ENCODE measurements at regions of chr20 and their contacts with region 1.

Region 1: DNA sequence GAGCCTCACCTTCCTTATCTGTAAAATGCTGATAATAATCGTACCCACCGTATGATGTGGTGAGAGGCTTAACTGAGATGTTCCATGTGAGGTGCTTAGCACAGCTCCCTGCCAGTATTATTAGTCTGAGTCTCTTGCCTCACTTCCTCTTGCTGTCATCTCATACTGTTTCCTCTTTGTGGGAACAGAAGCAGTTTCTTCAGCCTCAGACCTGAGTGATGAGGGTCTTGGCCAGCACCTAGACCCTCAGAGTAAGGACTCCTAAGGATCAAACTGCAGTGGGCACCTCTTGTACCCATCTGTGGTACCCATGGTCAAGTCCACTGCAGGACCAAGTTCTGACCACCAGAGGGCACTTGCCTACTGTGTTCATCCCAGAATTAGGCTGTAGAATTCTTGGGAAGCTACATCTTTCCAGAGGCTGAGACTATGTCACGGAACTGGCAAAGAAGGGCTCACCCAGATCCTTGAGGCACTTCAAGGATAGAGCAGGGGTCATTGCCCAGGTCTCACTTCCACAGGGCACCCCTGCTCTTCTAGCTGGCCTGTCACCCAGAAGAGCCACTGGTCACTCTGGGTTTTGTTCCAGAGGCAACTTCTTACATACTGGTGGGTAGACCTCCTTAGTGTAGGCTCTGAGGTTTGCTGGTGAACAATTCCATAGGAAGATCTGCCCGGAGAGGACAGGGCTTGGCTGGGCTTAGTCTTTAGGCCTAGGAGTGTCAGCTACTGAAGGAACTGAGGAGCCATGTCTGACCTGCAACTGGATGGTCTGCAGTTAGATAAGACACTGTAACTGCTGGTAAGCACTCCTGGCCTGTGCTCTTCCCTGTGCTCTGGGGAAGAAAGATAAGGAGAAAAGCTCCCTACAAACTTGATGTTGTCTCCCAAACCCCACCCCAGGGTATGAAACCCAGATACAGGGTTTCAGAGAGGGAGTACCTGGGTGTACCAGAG is 20.6 kb upstream of the SGK2 start:
- DNase-seq: peak; percentile 60
- ATAC-seq: peak; percentile 96
- H3K4me3 ChIP-seq: no peak overlapping the region
- H3K27ac ChIP-seq: no peak overlapping the region
- H3K4me1 ChIP-seq: no peaks in the 10 kb centered on the region; the same call in 1 of the 2 replicates
- H3K27me3 ChIP-seq: no peaks in the 10 kb centered on the region; the same call in 1 of the 2 replicates
- CTCF ChIP-seq: peak; percentile 88
- POLR2A ChIP-seq: no peak
- RAD21 ChIP-seq: peak; percentile 83

Region 2: GRCh38 chr20:43590392-43591323 is 52.5 kb after region 1 on chr20 and contains the start of gene IFT52:
- CTCF ChIA-PET with region 1: interaction called, 6 read pairs
- POLR2A ChIA-PET with region 1: no interaction called
- dilution Hi-C with region 1: no loop called
- in situ Hi-C with region 1: no loop called
- intact Hi-C with region 1: loop called (anchors 1 kb)
- DNase-seq: peak; percentile 88
- ATAC-seq: peak; percentile 98
- H3K4me3 ChIP-seq: peak within 1 kb of the TSS; percentile 96
- H3K27ac ChIP-seq: peak within 1 kb of the TSS; percentile 83
- H3K4me1 ChIP-seq: peaks cover 3% of the 10 kb centered on the region; the same call in 1 of the 2 replicates
- H3K27me3 ChIP-seq: no peaks in the 10 kb centered on the region
- CTCF ChIP-seq: no peak
- POLR2A ChIP-seq: peak; percentile 45; the same call in 1 of the 2 replicates
- RAD21 ChIP-seq: no peak
- total RNA-seq, gene IFT52: 55.6 and 60.8 TPM in 2 replicates

Region 3: GRCh38 chr20:43691928-43692524 is 153.8 kb after region 1 on chr20:
- CTCF ChIA-PET with region 1: interaction called, 20 read pairs
- POLR2A ChIA-PET with region 1: no interaction called
- dilution Hi-C with region 1: no loop called
- in situ Hi-C with region 1: loop called (anchors 10 kb)
- intact Hi-C with region 1: loop called (anchors 1 kb)
- DNase-seq: peak; percentile 18
- ATAC-seq: peak; percentile 49
- H3K4me3 ChIP-seq: no peak overlapping the region
- H3K27ac ChIP-seq: no peak overlapping the region
- H3K4me1 ChIP-seq: no peaks in the 10 kb centered on the region
- H3K27me3 ChIP-seq: no peaks in the 10 kb centered on the region
- CTCF ChIP-seq: peak; percentile 52
- POLR2A ChIP-seq: no peak
- RAD21 ChIP-seq: peak; percentile 60

Region 4: GRCh38 chr20:44092551-44093248 is 554.5 kb after region 1 on chr20:
- CTCF ChIA-PET with region 1: no interaction called
- POLR2A ChIA-PET with region 1: no interaction called
- dilution Hi-C with region 1: no loop called
- in situ Hi-C with region 1: no loop called
- intact Hi-C with region 1: loop called (anchors 1 kb)
- DNase-seq: peak; percentile 49
- ATAC-seq: peak; percentile 62
- H3K4me3 ChIP-seq: no peak overlapping the region
- H3K27ac ChIP-seq: no peak overlapping the region
- H3K4me1 ChIP-seq: peaks cover 3% of the 10 kb centered on the region
- H3K27me3 ChIP-seq: peaks cover 2% of the 10 kb centered on the region; the same call in 1 of the 2 replicates
- CTCF ChIP-seq: peak; percentile 56
- POLR2A ChIP-seq: no peak
- RAD21 ChIP-seq: peak; percentile 61